ENCODE measurements at regions of chr16 and their contacts with region 1.

Region 1: GRCh38 chr16:85615852-85616606 is 2.9 kb downstream of the GSE1 start:
- DNase-seq: peak; percentile 91
- ATAC-seq: peak; percentile 48
- H3K4me3 Mint-ChIP-seq: peak overlapping the region; percentile 76
- H3K27ac Mint-ChIP-seq: peak overlapping the region; percentile 75
- H3K4me1 Mint-ChIP-seq: peaks cover 42% of the 10 kb centered on the region
- H3K27me3 Mint-ChIP-seq: no peaks in the 10 kb centered on the region

Region 2: GRCh38 chr16:85305996-85306792 is 309.8 kb before region 1 on chr16:
- CTCF ChIA-PET with region 1: interaction called, 19 read pairs
- POLR2A ChIA-PET with region 1: interaction called, 3 read pairs
- DNase-seq: peak; percentile 95
- ATAC-seq: peak; percentile 87
- H3K4me3 Mint-ChIP-seq: peak overlapping the region; percentile 50
- H3K27ac Mint-ChIP-seq: peak overlapping the region; percentile 97
- H3K4me1 Mint-ChIP-seq: peaks cover 75% of the 10 kb centered on the region
- H3K27me3 Mint-ChIP-seq: no peaks in the 10 kb centered on the region

Region 3: DNA sequence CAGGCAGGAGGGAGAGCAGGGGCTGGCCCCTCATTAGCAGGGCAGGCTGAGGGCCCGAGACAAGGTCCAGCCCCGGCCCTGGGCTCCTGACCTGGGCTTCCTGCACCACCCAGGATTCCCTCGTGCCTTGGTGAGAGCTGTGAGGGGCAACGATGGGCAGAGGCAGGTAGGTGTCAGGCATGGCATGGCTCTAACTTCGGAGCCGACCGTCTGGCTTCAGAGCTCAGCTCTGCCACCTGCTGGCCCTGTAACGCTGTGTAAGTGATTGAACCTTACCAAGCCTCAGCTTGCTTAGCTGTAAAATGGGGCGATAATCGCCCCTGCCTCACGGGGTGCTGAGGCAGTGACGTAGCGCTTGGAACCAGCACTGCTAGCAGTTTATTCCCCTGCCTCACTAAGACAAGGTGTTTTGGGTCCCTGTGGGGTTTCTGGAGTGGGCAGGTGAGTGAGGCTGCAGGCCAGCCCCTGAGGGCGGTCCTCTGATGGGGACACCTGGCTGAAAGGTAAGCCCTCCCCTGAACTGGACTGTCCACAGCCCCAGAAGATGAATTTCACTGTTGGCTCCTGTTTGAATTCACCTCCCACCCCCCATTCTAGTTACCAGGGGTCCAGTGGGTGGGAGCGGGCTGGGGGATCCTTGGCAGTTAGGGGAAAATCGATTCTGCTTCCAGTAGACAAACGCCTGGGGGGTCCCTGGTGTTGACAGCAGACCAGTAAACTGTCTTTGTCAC is 187.7 kb before region 1 on chr16:
- CTCF ChIA-PET with region 1: interaction called, 79 read pairs
- POLR2A ChIA-PET with region 1: no interaction called
- DNase-seq: peak; percentile 68
- ATAC-seq: peak; percentile 86
- H3K4me3 Mint-ChIP-seq: no peak overlapping the region
- H3K27ac Mint-ChIP-seq: no peak overlapping the region
- H3K4me1 Mint-ChIP-seq: no peaks in the 10 kb centered on the region
- H3K27me3 Mint-ChIP-seq: peaks cover 3% of the 10 kb centered on the region

Region 4: DNA sequence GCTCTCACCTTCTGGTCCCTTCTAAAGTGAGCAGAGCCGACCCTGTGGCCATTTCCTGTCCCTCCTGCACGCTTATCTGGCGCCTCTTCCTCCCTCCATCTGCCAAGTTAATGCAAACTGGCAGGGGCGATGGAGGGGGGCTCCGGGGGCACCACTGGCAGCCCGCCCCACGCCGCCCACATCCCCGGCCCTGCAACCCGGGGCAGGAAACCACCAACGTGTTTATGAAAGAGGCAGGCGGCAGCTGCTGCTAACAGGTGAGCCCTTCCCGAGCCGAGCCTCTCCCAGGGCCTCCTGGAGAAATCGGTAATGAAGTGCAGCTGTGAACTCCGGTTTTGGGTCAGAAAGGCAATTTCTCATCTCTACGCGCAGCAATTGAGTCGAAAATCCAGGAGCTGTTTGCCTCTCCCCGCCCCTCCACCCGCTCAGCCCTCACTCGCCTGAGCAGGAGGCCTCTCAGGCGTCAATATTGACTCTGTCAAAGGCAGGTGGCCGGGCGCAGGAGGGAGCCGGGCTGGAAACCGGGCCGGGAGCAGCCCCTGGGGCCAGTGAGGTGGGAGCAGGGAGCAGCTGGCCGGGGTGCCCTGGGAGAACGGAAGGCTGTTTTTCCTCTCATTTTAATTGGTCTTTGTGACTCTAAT is 167.4 kb before region 1 on chr16:
- CTCF ChIA-PET with region 1: interaction called, 16 read pairs
- POLR2A ChIA-PET with region 1: no interaction called
- DNase-seq: peak; percentile 65
- ATAC-seq: peak; percentile 67
- H3K4me3 Mint-ChIP-seq: peak overlapping the region; percentile 10
- H3K27ac Mint-ChIP-seq: peak overlapping the region; percentile 58
- H3K4me1 Mint-ChIP-seq: peaks cover 40% of the 10 kb centered on the region
- H3K27me3 Mint-ChIP-seq: no peaks in the 10 kb centered on the region

Region 5: DNA sequence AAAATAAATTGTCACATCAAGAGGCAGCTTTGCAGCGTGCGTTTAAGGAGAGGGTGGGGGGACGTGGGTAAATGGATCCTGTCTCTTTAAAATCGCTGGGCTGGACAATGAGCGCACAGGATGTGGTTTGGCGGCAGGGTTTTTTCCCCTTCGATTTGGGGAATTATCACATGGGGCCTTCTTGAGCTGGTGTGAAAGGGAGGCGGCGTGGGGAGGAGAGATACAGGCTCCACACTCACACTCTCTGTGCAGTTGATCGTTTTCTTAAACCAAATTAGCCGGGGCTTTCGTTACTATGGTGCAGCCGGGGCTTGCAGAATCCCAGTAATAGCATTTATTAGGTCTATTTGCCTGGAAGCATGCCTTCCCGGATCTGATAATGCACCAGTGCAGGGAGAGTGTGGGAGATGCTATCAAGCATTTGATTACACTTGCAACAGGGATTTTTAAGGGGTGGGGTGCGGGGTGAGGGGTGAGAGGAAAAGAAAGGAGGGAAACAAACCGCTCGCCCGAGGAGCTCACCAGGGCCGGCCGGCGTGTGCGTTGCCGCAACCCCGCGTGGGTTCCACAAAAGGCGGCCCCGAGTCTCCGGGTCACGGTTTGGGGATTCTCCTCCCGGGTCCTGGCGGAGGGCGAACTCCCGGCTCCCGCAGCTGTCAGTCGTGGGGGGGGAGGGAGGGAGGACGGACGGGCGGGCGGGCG is 61.8 kb before region 1 on chr16:
- CTCF ChIA-PET with region 1: interaction called, 69 read pairs
- POLR2A ChIA-PET with region 1: interaction called, 34 read pairs
- DNase-seq: peak; percentile 93
- ATAC-seq: peak; percentile 57
- H3K4me3 Mint-ChIP-seq: peak overlapping the region; percentile 83
- H3K27ac Mint-ChIP-seq: peak overlapping the region; percentile 93
- H3K4me1 Mint-ChIP-seq: peaks cover 42% of the 10 kb centered on the region
- H3K27me3 Mint-ChIP-seq: no peaks in the 10 kb centered on the region

Region 6: GRCh38 chr16:85626191-85626981 is 10.4 kb after region 1 on chr16:
- CTCF ChIA-PET with region 1: interaction called, 40 read pairs
- POLR2A ChIA-PET with region 1: no interaction called
- DNase-seq: no peak
- ATAC-seq: no peak
- H3K4me3 Mint-ChIP-seq: no peak overlapping the region
- H3K27ac Mint-ChIP-seq: no peak overlapping the region
- H3K4me1 Mint-ChIP-seq: peaks cover 29% of the 10 kb centered on the region
- H3K27me3 Mint-ChIP-seq: no peaks in the 10 kb centered on the region

Measured in activated CD8-positive, alpha-beta T cell treated with anti-CD3 and anti-CD28 coated beads, Interleukin-2, amount 10 ng/mL, durations not matched to agents 7 days and 5 days (primary cell).